ENCODE measurements at regions of chr1 and their contacts with region 1.

Region 1: DNA sequence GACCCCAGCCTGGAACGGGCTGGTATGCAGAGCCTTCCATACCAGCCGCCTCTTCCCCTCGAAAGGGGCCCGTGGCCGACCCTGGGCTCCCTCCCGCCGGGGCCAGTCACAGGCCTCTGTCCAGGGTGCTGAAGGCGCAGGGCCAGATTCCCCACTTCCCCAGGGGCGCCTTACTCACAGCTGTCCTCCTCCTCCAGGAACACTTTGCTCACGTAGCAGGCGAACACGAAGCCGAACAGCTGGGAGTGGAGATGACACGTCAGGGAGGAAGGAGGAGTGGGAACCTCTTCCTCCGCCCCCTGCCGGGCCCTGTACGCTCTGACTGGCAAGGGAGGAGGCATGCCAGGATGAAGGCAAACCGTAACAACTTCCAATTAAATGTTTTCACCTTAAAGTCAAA is 57.3 kb downstream of the NKAIN1 start:
- DNase-seq: peak; percentile 93

Region 2: GRCh38 chr1:31422505-31423319 is 240.4 kb after region 1 on chr1:
- intact Hi-C with region 1: loop called (anchors 5 to 10 kb)
- DNase-seq: peak; percentile 88